Sciatic nerve (tissue), 2 donors: ENCODE measurements at regions of chr2 and their contacts with region 1.

Region 1: GRCh38 chr2:225512878-225513580 is 113.5 kb downstream of the NYAP2 start:
- DNase-seq: no peak
- ATAC-seq: no peak

Region 2: DNA sequence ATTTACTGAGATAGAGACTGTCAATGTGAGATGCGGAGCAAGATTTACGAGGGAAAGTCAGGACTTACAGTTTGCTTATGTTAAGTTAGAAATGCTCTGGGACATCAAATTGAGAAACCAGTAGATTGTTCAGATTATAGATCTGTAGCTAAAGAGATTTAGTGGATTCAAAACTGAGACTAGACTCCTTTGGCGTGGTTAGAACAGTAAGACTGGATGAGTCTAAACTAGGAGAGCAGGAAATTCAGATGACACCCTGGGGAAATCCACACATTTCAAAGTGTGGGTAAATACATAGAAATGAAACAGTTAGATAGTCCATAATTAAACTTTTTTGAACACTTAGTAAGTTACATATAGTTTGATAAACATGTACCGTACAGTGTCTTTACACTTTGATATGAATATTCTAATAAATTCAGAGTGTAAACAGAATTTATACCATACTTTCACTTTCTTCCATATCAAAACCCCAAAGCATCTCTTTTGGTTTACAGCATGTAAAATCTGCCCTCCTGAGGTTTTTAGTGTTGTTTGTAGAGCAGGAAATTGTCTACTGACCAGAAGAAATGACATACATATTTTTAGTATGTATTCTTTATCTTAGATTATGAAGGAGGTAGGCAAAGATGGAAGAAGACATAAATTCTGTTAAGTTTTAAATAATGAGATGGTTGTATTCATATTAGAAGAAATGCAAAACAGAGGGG is 118.0 kb after region 1 on chr2:
- intact Hi-C with region 1: no loop called
- DNase-seq: no peak
- ATAC-seq: no peak

Region 3: GRCh38 chr2:227443889-227444568 is 1931.0 kb after region 1 on chr2:
- intact Hi-C with region 1: loop called (anchors 5 kb)
- DNase-seq: no peak
- ATAC-seq: no peak